ENCODE measurements at regions of chr6 and their contacts with region 1.

Region 1: GRCh38 chr6:46848684-46849360 is 55.6 kb downstream of the MEP1A start:
- DNase-seq: peak; percentile 93
- ATAC-seq: peak; percentile 98

Region 2: GRCh38 chr6:46893648-46894047 is 44.8 kb after region 1 on chr6:
- intact Hi-C with region 1: no loop called
- DNase-seq: no peak
- ATAC-seq: no peak

Region 3: GRCh38 chr6:46989384-46989783 is 140.6 kb after region 1 on chr6:
- intact Hi-C with region 1: loop called (anchors 2 kb)
- DNase-seq: no peak
- ATAC-seq: peak; percentile 19

Region 4: DNA sequence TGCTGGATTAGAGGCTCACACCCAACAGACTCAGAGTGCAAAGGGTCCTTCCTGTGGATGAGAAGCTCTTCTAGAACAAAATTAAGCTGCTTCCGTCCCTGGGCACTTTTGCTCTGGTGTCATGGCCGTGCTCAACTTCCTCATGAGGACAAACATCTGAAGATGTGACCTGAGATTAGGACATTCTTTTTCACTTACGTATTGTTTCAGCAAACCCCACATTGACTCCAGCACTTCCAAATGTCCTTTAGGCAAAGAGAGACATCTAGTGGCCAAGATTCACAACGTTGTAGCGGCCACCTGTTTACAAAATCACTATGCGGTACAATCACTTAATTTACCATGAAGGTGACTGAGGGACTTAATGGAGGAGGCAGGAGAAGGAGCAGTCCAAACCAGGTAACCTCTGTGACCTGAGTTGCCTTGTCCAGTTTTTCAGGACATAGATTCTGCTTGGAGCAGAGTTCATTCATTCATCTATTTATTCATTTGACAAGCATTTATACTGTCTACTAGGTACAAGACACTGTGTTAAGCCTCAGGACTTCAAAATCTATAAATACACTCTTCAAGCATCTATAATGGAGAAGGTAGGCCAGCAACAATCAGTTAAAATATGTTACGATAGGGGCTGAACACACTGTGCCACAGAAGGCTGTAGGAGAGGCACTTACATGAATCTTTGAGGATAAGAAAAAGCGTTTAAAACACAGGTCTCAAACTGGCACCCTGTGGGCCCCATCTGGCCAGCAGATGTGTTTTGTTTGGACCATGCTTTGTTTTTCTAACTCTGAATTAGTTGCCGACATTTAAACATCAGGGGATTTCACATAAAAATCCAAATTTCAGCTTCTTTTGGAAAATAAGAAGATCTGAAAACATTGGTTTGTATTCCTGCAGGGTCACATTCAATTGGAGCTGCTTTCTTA is 198.9 kb after region 1 on chr6:
- intact Hi-C with region 1: loop called (anchors 2 kb)
- DNase-seq: no peak
- ATAC-seq: peak; percentile 94

Measured in Right ventricle myocardium superior (tissue), 1 donor.